ENCODE measurements at regions of chr7 and their contacts with region 1.

Region 1: DNA sequence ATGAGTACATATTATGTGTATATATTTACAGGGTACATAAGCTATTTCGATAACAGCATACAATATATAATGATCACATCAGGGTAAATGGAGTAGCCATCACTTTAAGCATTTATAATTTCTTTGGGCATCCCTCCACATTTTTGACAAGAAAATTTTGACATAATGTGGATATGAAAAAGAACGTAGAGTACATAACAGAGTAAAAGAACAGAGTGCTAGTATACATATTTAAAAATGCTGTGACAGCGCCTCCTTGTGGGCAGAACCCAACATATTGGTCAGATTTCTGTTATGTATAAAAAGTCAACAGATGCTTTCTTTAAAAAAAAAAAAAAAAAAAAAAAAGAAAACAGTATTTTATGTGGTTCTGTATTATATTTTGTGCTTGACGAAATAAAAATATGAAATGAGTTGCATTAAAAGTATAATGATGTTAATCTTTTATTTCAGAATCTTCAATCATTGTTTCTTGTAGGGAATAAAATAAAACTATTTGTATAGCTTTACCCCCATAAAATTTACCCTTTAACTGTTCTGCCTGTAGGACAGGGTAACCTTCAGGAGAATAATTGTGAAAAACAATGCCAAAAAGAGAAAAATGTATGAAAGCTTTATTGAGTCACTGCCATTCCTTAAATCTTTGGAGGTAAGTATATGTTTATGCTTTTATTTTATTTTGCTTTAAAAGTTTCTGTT is 18.3 kb upstream of the HBP1 start:
- DNase-seq: peak; percentile 60 to 89 (median 76)
- ATAC-seq: peak; percentile 89
- H3K4me3 ChIP-seq: no peak overlapping the region
- H3K4me3 Mint-ChIP-seq: no peak overlapping the region
- H3K27ac ChIP-seq: no peak overlapping the region
- H3K27ac Mint-ChIP-seq: no peak overlapping the region
- H3K4me1 ChIP-seq: no peaks in the 10 kb centered on the region
- H3K4me1 Mint-ChIP-seq: peaks cover 6% of the 10 kb centered on the region
- H3K27me3 ChIP-seq: no peaks in the 10 kb centered on the region
- H3K27me3 Mint-ChIP-seq: no peaks in the 10 kb centered on the region
- CTCF ChIP-seq: peak; percentile 94

Region 2: GRCh38 chr7:106865130-106866041 is 285.1 kb before region 1 on chr7 and contains the start of gene PIK3CG:
- CTCF ChIA-PET with region 1: no interaction called
- POLR2A ChIA-PET with region 1: no interaction called
- intact Hi-C with region 1: loop called in 1 of 2 experiments (anchors 10 kb)
- DNase-seq: peak in 5 of 14 experiments; percentile 6 to 86 (median 75)
- ATAC-seq: peak; percentile 94
- H3K4me3 ChIP-seq: peak within 1 kb of the TSS; percentile 62
- H3K4me3 Mint-ChIP-seq: peak within 1 kb of the TSS; percentile 92
- H3K27ac ChIP-seq: peak within 1 kb of the TSS; percentile 77 to 80
- H3K27ac Mint-ChIP-seq: peak within 1 kb of the TSS; percentile 93
- H3K4me1 ChIP-seq: peaks cover 61% of the 10 kb centered on the region
- H3K4me1 Mint-ChIP-seq: peaks cover 82% of the 10 kb centered on the region
- H3K27me3 ChIP-seq: no peaks in the 10 kb centered on the region
- H3K27me3 Mint-ChIP-seq: no peaks in the 10 kb centered on the region
- CTCF ChIP-seq: no peak
- total RNA-seq, gene PIK3CG: 20.8 to 21.2 TPM

Region 3: DNA sequence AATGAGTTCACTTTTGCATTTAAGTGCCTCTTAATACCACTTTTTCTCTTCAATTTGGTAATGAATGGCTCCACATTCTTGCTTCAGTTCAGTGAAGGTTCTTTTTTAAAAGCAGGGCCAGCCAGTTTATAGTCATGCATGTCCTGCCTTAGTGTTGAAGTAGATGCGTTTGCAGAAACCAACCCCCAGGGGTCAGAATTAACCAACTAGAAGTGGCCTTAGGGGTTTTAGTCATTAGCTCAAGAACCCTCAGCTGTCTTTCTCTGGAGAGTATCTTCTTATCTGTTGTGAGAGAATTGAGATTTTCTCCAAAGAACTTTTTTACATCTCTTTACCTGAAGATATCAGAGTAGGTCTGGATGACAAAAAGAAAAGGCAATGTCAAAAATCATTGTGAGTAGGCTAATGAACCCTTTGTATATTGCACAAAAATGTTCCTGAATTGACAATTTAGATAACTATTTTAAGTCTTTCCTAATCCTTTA is 203.2 kb before region 1 on chr7:
- CTCF ChIA-PET with region 1: interaction called, 3 read pairs
- POLR2A ChIA-PET with region 1: interaction called, 4 read pairs
- intact Hi-C with region 1: loop called (anchors 1 to 2 kb)
- DNase-seq: peak in 8 of 14 experiments; percentile 5 to 66 (median 30)
- ATAC-seq: peak; percentile 59
- H3K4me3 ChIP-seq: no peak overlapping the region
- H3K4me3 Mint-ChIP-seq: no peak overlapping the region
- H3K27ac ChIP-seq: no peak overlapping the region
- H3K27ac Mint-ChIP-seq: no peak overlapping the region
- H3K4me1 ChIP-seq: no peaks in the 10 kb centered on the region
- H3K4me1 Mint-ChIP-seq: no peaks in the 10 kb centered on the region
- H3K27me3 ChIP-seq: no peaks in the 10 kb centered on the region
- H3K27me3 Mint-ChIP-seq: no peaks in the 10 kb centered on the region
- CTCF ChIP-seq: peak; percentile 33

Region 4: GRCh38 chr7:107069457-107069856 is 81.1 kb before region 1 on chr7:
- CTCF ChIA-PET with region 1: no interaction called
- POLR2A ChIA-PET with region 1: no interaction called
- intact Hi-C with region 1: no loop called
- DNase-seq: no peak
- ATAC-seq: no peak
- H3K4me3 ChIP-seq: no peak overlapping the region
- H3K4me3 Mint-ChIP-seq: no peak overlapping the region
- H3K27ac ChIP-seq: no peak overlapping the region
- H3K27ac Mint-ChIP-seq: no peak overlapping the region
- H3K4me1 ChIP-seq: no peaks in the 10 kb centered on the region
- H3K4me1 Mint-ChIP-seq: no peaks in the 10 kb centered on the region
- H3K27me3 ChIP-seq: no peaks in the 10 kb centered on the region
- H3K27me3 Mint-ChIP-seq: peaks cover 5% of the 10 kb centered on the region
- CTCF ChIP-seq: no peak

Region 5: DNA sequence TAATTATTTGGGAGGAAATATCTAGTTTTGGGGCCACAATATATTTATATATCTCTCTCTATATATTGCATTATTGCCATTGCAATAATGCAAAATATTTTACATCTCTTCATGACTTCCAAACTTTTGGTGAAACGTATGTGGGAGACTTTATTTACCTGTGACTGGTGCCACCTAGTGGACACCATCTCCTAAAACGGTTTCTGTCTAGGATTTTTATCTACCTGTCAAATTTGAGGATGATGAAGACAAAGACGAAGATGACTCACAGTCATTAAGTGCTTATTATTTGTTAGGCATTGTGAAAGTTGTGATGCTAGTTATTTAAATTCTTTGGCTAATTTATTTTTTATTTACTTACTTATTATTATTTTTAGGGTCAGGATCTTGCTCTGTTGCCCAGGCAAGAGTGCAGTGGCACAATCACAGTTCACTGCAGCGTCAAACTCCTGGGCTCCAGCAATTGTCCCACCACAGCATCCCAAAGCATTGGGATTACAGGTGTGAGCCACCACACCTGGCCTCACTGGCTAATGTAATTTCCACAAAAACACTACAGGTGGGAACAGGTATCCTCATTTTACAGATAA is 574.7 kb after region 1 on chr7:
- CTCF ChIA-PET with region 1: no interaction called
- POLR2A ChIA-PET with region 1: no interaction called
- intact Hi-C with region 1: loop called (anchors 1 kb)
- DNase-seq: peak in 13 of 14 experiments; percentile 4 to 79 (median 29)
- ATAC-seq: no peak
- H3K4me3 ChIP-seq: no peak overlapping the region
- H3K4me3 Mint-ChIP-seq: no peak overlapping the region
- H3K27ac ChIP-seq: no peak overlapping the region
- H3K27ac Mint-ChIP-seq: no peak overlapping the region
- H3K4me1 ChIP-seq: no peaks in the 10 kb centered on the region
- H3K4me1 Mint-ChIP-seq: no peaks in the 10 kb centered on the region
- H3K27me3 ChIP-seq: no peaks in the 10 kb centered on the region
- H3K27me3 Mint-ChIP-seq: peaks cover 9% of the 10 kb centered on the region
- CTCF ChIP-seq: peak; percentile 78

Region 6: DNA sequence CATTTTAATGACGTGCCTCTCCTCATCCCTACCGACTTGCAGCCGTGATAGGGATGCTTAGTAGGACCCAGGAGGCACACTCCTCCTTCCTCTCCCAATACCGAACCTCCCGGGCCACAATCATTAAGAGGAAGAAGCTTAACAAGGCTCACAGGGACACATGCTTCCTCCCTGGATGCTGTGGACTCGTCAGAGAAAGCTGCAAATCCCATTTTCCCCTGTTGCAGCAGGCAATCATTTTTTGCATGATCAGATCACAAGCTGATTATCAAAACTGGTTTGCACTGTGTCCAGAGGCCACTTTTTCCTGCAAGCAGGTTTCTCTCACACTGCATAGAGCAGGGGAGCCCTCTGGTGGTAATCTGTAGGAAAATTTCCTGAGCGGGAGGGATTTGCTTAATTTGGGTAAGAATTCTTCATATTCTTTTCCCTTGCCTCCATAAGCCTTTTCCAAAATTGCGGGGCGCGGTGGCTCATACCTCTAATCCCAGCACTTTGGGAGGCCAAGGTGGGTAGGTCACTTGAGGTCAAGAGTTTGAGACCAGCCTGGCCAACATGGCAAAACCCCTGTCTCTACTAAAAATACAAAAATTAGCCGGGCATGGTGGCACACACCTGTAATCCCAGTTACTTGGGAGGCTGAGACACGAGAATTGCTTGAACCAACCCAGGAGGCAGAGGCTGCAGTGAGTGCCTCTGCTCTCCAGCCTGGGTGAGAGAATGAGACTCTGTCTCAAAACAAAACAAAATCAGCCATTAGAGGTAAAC is 995.7 kb after region 1 on chr7:
- CTCF ChIA-PET with region 1: no interaction called
- POLR2A ChIA-PET with region 1: no interaction called
- intact Hi-C with region 1: loop called in 1 of 2 experiments (anchors 2 kb)
- DNase-seq: peak in 8 of 14 experiments; percentile 1 to 62 (median 31)
- ATAC-seq: no peak
- H3K4me3 ChIP-seq: no peak overlapping the region
- H3K4me3 Mint-ChIP-seq: no peak overlapping the region
- H3K27ac ChIP-seq: no peak overlapping the region
- H3K27ac Mint-ChIP-seq: no peak overlapping the region
- H3K4me1 ChIP-seq: peaks cover 3% of the 10 kb centered on the region
- H3K4me1 Mint-ChIP-seq: no peaks in the 10 kb centered on the region
- H3K27me3 ChIP-seq: peaks cover under 1 to 6% of the 10 kb centered on the region in 2 experiments
- H3K27me3 Mint-ChIP-seq: peaks cover 9% of the 10 kb centered on the region
- CTCF ChIP-seq: peak; percentile 67

Measured in CD4-positive, alpha-beta T cell (primary cell).